Calu3 (cell line): ENCODE measurements at regions of chr4 and their contacts with region 1.

Region 1: GRCh38 chr4:77240469-77241066 is 83.6 kb downstream of the CCNG2 start:
- DNase-seq: peak; percentile 75
- H3K4me3 Mint-ChIP-seq: no peak overlapping the region
- H3K27ac Mint-ChIP-seq: no peak overlapping the region
- H3K4me1 Mint-ChIP-seq: no peaks in the 10 kb centered on the region
- H3K27me3 Mint-ChIP-seq: peaks cover 85% of the 10 kb centered on the region
- CTCF ChIP-seq: peak; percentile 64

Region 2: GRCh38 chr4:77141964-77142645 is 98.5 kb before region 1 on chr4:
- CTCF ChIA-PET with region 1: no interaction called
- intact Hi-C with region 1: no loop called
- DNase-seq: no peak
- H3K4me3 Mint-ChIP-seq: no peak overlapping the region
- H3K27ac Mint-ChIP-seq: no peak overlapping the region
- H3K4me1 Mint-ChIP-seq: peaks cover 8% of the 10 kb centered on the region
- H3K27me3 Mint-ChIP-seq: no peaks in the 10 kb centered on the region
- CTCF ChIP-seq: no peak

Region 3: DNA sequence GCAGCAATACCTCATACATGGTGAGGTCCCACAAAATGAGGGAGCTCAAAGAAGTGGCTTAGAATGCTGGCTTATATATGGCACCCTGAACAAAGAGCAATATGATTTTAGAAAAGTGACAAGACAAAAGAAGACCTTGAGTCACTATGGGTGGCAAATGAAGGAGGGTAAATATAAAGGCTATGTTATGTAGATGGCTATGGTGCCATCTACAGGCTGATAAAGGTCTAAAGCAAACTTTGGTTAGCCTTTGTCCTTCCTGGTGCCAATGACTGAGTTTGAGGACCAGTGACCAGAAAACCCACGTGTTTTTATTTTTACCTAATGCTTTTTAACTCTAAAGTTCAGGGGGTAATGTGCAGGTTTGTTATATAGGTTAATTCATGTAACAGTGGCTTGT is 68.3 kb after region 1 on chr4:
- CTCF ChIA-PET with region 1: no interaction called
- intact Hi-C with region 1: loop called (anchors 1 kb)
- DNase-seq: peak; percentile 1
- H3K4me3 Mint-ChIP-seq: no peak overlapping the region
- H3K27ac Mint-ChIP-seq: no peak overlapping the region
- H3K4me1 Mint-ChIP-seq: no peaks in the 10 kb centered on the region
- H3K27me3 Mint-ChIP-seq: peaks cover 30% of the 10 kb centered on the region
- CTCF ChIP-seq: no peak

Region 4: GRCh38 chr4:77358315-77358928 is 117.9 kb after region 1 on chr4:
- CTCF ChIA-PET with region 1: interaction called, 26 read pairs
- intact Hi-C with region 1: loop called (anchors 1 kb)
- DNase-seq: peak; percentile 35
- H3K4me3 Mint-ChIP-seq: no peak overlapping the region
- H3K27ac Mint-ChIP-seq: no peak overlapping the region
- H3K4me1 Mint-ChIP-seq: no peaks in the 10 kb centered on the region
- H3K27me3 Mint-ChIP-seq: peaks cover 28% of the 10 kb centered on the region
- CTCF ChIP-seq: no peak